T-cell (primary cell): ENCODE measurements at regions of chr2 and their contacts with region 1.

Region 1: DNA sequence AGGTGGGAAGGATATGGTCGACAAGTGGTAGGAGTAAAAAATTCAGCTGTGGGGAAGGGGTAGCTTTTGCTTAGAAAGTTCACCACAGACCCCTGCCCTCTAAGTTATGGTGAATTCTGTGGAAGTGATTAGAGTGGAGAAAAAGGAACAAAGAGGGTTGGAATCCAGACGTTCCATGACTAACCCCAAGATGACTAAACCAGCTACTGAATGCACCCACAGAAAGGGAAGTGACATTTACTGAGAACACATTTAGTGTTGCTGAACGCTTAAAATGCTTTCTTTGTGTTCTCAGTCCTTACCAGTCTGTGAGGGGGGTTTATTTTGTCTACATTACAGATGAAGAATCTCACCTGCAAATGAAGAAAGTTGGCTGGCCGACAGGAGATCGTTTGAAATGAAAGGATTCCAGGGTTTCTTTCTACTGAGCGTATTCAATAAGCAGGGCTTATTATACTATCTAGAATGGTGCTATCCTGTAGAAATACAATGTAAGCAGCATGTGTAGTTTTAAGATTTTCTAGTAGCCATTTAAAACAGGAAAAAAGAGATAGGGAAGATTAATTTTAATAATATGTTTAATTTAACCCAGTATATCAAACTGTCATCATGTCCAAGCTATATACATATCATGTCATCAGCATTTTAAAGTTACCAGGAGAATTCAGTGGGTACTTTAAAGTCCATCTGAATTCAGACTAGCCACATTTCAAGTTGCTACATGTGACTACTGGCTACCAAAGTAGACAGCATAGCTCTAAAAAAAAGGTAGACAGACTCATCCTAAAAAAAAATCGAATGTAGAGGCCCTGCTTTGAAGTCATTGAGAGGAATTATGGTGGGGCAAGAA is 60.1 kb downstream of the LIMS1 start:
- DNase-seq: no peak
- ATAC-seq: no peak
- H3K4me3 ChIP-seq: no peak overlapping the region
- H3K4me3 Mint-ChIP-seq: no peak overlapping the region
- H3K27ac ChIP-seq: no peak overlapping the region
- H3K27ac Mint-ChIP-seq: no peak overlapping the region
- H3K4me1 ChIP-seq: no peaks in the 10 kb centered on the region
- H3K4me1 Mint-ChIP-seq: peaks cover 31 to 34% (median 31%) of the 10 kb centered on the region in 3 donors
- H3K27me3 ChIP-seq: no peaks in the 10 kb centered on the region
- H3K27me3 Mint-ChIP-seq: no peaks in the 10 kb centered on the region

Region 2: DNA sequence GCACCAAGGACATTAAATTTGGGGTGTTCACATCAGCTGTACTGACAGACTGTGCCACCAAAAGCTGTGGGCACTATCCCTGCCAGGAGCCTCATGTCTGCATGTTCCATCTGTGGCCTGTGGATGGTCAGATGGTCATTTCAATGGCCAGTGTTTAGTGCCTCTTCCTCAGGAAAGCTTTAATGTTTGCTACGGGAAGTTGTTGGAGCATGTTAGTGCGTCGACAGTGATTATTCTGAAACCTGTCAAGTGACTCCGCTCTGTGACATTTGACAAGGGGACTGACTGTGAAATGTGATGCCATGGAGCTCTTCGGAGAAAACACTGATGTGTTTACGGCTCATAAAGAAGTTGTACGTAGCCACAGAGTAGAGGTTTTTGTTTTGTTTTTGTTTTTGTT is 786.4 kb before region 1 on chr2:
- CTCF ChIA-PET with region 1: interaction called in 1 of 2 experiments, 17 read pairs
- POLR2A ChIA-PET with region 1: no interaction called
- DNase-seq: no peak
- ATAC-seq: no peak
- H3K4me3 ChIP-seq: no peak overlapping the region
- H3K4me3 Mint-ChIP-seq: no peak overlapping the region
- H3K27ac ChIP-seq: no peak overlapping the region
- H3K27ac Mint-ChIP-seq: no peak overlapping the region
- H3K4me1 ChIP-seq: no peaks in the 10 kb centered on the region
- H3K4me1 Mint-ChIP-seq: no peaks in the 10 kb centered on the region
- H3K27me3 ChIP-seq: no peaks in the 10 kb centered on the region
- H3K27me3 Mint-ChIP-seq: peaks cover 0 to 3% of the 10 kb centered on the region in 2 donors

Region 3: GRCh38 chr2:108583903-108584520 is 10.3 kb before region 1 on chr2:
- CTCF ChIA-PET with region 1: interaction called, 7 to 12 read pairs
- POLR2A ChIA-PET with region 1: no interaction called
- DNase-seq: peak in 33 of 35 experiments; percentile 4 to 78 (median 37)
- ATAC-seq: peak; percentile 71 to 85 (median 82)
- H3K4me3 ChIP-seq: no peak overlapping the region
- H3K4me3 Mint-ChIP-seq: no peak overlapping the region
- H3K27ac ChIP-seq: no peak overlapping the region
- H3K27ac Mint-ChIP-seq: peak overlapping the region in 1 of 2 donors; percentile 31
- H3K4me1 ChIP-seq: peaks cover 2 to 6% of the 10 kb centered on the region in 2 experiments
- H3K4me1 Mint-ChIP-seq: peaks cover 20 to 32% (median 25%) of the 10 kb centered on the region in 3 donors
- H3K27me3 ChIP-seq: no peaks in the 10 kb centered on the region
- H3K27me3 Mint-ChIP-seq: no peaks in the 10 kb centered on the region

Region 4: DNA sequence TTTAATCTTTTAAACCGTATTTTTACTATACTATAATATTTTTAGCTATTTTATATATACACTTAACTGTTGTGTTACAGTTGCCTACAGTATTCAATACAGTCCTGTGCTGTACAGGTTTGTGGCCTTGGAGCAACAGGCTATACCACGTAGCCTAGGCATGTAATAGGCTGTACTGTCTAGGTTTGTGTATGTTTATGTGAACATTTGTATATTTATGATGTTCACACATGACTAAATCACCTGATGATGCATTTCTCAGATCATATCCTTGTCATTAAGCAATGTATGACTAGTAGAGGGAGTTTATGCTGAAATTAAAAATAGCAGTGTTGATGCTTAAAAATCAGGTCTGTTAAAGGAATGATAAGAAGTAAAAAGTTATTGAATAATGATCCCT is 32.6 kb after region 1 on chr2:
- CTCF ChIA-PET with region 1: interaction called in 1 of 2 experiments, 4 read pairs
- POLR2A ChIA-PET with region 1: interaction called in 1 of 2 experiments, 19 read pairs
- DNase-seq: no peak
- ATAC-seq: no peak
- H3K4me3 ChIP-seq: no peak overlapping the region
- H3K4me3 Mint-ChIP-seq: peak overlapping the region in 1 of 3 donors; percentile 21
- H3K27ac ChIP-seq: peak overlapping the region; percentile 59
- H3K27ac Mint-ChIP-seq: no peak overlapping the region
- H3K4me1 ChIP-seq: peaks cover 24 to 38% of the 10 kb centered on the region in 2 experiments
- H3K4me1 Mint-ChIP-seq: peaks cover 69 to 77% (median 76%) of the 10 kb centered on the region in 3 donors
- H3K27me3 ChIP-seq: no peaks in the 10 kb centered on the region
- H3K27me3 Mint-ChIP-seq: no peaks in the 10 kb centered on the region